Endothelial cell of umbilical vein (primary cell): ENCODE measurements at regions of chr13 and their contacts with region 1.

Region 1: DNA sequence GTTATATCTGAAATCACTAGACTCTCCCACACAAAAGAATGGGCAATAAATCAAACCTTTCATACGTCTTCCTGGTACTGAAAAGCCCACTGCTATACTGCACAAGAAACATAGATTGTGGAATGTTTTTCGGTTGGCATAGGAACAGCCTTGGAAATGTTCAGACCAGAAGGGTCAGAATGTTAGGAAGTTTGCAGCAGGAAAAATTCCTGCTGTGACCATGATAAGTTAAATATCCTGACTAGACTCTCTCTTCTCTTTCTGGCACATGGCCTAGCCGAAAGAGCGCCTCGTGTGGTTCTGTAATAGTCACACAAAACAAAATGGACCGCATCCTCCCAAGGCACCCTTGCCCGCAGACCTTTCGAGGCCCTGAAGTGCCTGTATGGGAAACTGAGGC is 427.2 kb downstream of the COG6 start:
- DNase-seq: peak; percentile 99
- H3K4me3 ChIP-seq: no peak overlapping the region
- H3K27ac ChIP-seq: peak overlapping the region; percentile 71
- H3K4me1 ChIP-seq: peaks cover 11% of the 10 kb centered on the region
- H3K27me3 ChIP-seq: no peaks in the 10 kb centered on the region
- CTCF ChIP-seq: peak; percentile 30 to 62
- POLR2A ChIP-seq: no peak

Region 2: GRCh38 chr13:40116008-40116407 is 33.4 kb after region 1 on chr13:
- CTCF ChIA-PET with region 1: interaction called, 4 read pairs
- POLR2A ChIA-PET with region 1: no interaction called
- dilution Hi-C with region 1: no loop called
- intact Hi-C with region 1: loop called (anchors 1 kb)
- DNase-seq: peak; percentile 98
- H3K4me3 ChIP-seq: no peak overlapping the region
- H3K27ac ChIP-seq: peak overlapping the region; percentile 93
- H3K4me1 ChIP-seq: peaks cover 17% of the 10 kb centered on the region
- H3K27me3 ChIP-seq: no peaks in the 10 kb centered on the region
- CTCF ChIP-seq: no peak
- POLR2A ChIP-seq: no peak

Region 3: DNA sequence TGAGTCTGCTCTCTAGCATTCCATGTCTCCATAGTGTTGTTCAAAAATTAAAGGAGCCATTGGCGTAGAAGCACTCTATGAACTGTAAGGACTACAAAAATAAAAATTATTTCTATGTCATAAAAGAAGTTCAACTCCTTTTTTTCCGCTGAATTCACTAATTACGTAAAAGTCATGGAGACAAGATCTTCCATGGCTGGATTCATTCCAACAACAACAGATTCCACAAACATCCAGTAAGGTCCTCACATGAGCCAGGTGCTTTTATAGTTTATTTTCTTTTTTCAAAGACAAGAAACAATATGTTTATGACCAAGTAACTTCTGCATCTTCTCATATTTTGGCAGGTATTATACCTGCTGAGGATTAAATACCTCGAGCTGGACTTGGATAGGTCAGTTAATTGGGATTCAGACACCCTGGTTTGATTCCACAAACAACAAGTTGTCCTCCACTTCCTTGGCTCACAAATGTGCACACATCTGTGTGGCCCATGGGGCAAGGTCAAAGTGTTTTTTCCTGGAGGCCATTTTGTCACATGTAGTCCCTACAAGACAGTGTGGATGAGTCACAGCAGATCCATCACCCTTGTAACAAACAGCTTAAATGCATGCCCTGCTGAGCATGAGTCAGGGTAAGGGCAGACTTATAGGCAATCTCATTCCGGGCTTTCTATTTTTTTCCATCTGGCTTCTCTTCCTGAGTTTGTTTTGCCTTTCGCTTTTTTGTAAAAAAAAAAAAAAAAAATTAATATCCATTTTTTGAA is 48.4 kb after region 1 on chr13:
- CTCF ChIA-PET with region 1: no interaction called
- POLR2A ChIA-PET with region 1: no interaction called
- dilution Hi-C with region 1: no loop called
- intact Hi-C with region 1: loop called (anchors 1 kb)
- DNase-seq: peak; percentile 93
- H3K4me3 ChIP-seq: no peak overlapping the region
- H3K27ac ChIP-seq: peak overlapping the region; percentile 60
- H3K4me1 ChIP-seq: peaks cover 13% of the 10 kb centered on the region
- H3K27me3 ChIP-seq: no peaks in the 10 kb centered on the region
- CTCF ChIP-seq: no peak
- POLR2A ChIP-seq: no peak

Region 4: GRCh38 chr13:40422588-40423235 is 340.1 kb after region 1 on chr13:
- CTCF ChIA-PET with region 1: no interaction called
- POLR2A ChIA-PET with region 1: no interaction called
- dilution Hi-C with region 1: no loop called
- intact Hi-C with region 1: no loop called
- DNase-seq: no peak
- H3K4me3 ChIP-seq: no peak overlapping the region
- H3K27ac ChIP-seq: no peak overlapping the region
- H3K4me1 ChIP-seq: no peaks in the 10 kb centered on the region
- H3K27me3 ChIP-seq: no peaks in the 10 kb centered on the region
- CTCF ChIP-seq: no peak
- POLR2A ChIP-seq: no peak

Region 5: GRCh38 chr13:40477623-40478608 is 395.3 kb after region 1 on chr13:
- CTCF ChIA-PET with region 1: no interaction called
- POLR2A ChIA-PET with region 1: no interaction called
- dilution Hi-C with region 1: no loop called
- intact Hi-C with region 1: loop called (anchors 1 kb)
- DNase-seq: peak; percentile 94
- H3K4me3 ChIP-seq: peak overlapping the region in 1 of 3 experiments; percentile 10
- H3K27ac ChIP-seq: peak overlapping the region; percentile 92
- H3K4me1 ChIP-seq: peaks cover 32% of the 10 kb centered on the region
- H3K27me3 ChIP-seq: no peaks in the 10 kb centered on the region
- CTCF ChIP-seq: no peak
- POLR2A ChIP-seq: peak; percentile 36